Activated B cell treated with CpG ODN at 0.5 μM for 24 hours (primary cell): ENCODE measurements at regions of chrX and their contacts with region 1.

Region 1: GRCh38 chrX:46984705-46985104 is 72.5 kb downstream of the JADE3 start:
- DNase-seq: no peak
- ATAC-seq: no peak
- H3K4me3 Mint-ChIP-seq: no peak overlapping the region
- H3K27ac Mint-ChIP-seq: no peak overlapping the region
- H3K4me1 Mint-ChIP-seq: peaks cover 12% of the 10 kb centered on the region
- H3K27me3 Mint-ChIP-seq: no peaks in the 10 kb centered on the region
- CTCF ChIP-seq: no peak

Region 2: DNA sequence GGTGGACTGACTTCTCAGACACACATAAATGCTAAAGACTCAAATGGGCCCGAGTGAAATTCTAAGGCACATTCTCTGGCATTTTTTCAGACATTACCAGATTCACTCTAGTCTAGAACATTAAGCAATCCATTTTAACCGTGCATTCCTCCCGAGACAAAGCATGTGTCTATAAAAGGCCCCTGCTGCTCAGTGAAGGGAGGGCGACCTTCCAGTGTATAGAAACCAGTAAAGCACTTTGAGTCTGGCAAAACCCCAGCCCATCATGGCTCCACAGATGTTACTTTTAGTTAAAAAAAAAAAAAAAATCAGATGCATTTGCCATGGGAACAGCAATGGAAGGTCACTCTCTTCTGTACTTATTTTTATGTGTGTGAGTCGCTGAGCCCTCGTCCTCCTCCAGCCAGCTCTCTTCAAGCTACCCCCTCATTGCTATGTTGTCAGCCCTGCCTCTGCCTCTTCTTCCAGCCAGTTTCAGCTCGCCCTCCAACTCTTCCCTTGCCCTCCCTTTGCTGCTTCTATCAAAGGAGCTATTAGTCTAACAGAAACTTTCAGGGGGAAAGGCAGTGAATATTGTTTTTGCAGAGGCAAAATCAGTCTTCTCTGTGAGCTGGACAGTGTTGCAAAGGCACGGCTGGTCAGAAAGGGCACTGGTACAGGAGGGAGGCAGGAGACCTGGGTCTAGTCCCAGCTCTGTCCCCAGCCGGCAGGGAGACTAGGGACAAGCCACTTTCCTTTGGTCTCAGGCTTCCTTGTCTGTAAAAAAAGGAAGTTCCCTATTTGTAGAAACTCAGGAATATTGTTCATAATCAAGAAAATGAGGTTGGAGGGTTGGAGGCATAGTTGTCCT is 1083.7 kb before region 1 on chrX:
- CTCF ChIA-PET with region 1: no interaction called
- POLR2A ChIA-PET with region 1: no interaction called
- intact Hi-C with region 1: no loop called
- DNase-seq: no peak
- ATAC-seq: no peak
- H3K4me3 Mint-ChIP-seq: no peak overlapping the region
- H3K27ac Mint-ChIP-seq: no peak overlapping the region
- H3K4me1 Mint-ChIP-seq: no peaks in the 10 kb centered on the region
- H3K27me3 Mint-ChIP-seq: peaks cover 2% of the 10 kb centered on the region
- CTCF ChIP-seq: no peak

Region 3: GRCh38 chrX:47012131-47012530 is 27.4 kb after region 1 on chrX:
- CTCF ChIA-PET with region 1: no interaction called
- POLR2A ChIA-PET with region 1: no interaction called
- intact Hi-C with region 1: loop called (anchors 5 kb)
- DNase-seq: no peak
- ATAC-seq: no peak
- H3K4me3 Mint-ChIP-seq: no peak overlapping the region
- H3K27ac Mint-ChIP-seq: no peak overlapping the region
- H3K4me1 Mint-ChIP-seq: no peaks in the 10 kb centered on the region
- H3K27me3 Mint-ChIP-seq: no peaks in the 10 kb centered on the region
- CTCF ChIP-seq: no peak

Region 4: DNA sequence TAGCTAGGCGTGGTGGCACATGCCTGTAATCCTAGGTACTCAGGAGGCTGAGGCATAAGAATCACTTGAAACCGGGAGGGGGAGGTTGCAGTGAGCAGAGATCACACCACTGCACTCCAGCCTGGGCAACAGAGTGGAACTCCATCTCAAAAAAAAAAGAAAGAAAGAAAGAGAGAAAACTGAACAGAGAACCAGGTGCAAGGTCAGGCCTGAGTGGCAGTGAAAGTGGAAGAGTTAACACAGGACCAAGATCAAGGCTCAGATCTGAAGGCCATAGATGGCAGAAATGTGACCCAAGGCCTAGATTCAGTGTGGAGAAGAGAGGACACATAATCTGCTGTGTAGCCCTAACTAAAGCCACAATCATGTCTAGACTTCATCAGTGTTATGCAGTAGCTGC is 1091.6 kb after region 1 on chrX:
- CTCF ChIA-PET with region 1: no interaction called
- POLR2A ChIA-PET with region 1: no interaction called
- intact Hi-C with region 1: no loop called
- DNase-seq: no peak
- ATAC-seq: no peak
- H3K4me3 Mint-ChIP-seq: no peak overlapping the region
- H3K27ac Mint-ChIP-seq: no peak overlapping the region
- H3K4me1 Mint-ChIP-seq: no peaks in the 10 kb centered on the region
- H3K27me3 Mint-ChIP-seq: no peaks in the 10 kb centered on the region
- CTCF ChIP-seq: no peak